ENCODE measurements at regions of chr10 and their contacts with region 1.

Region 1: GRCh38 chr10:78047314-78047891 is 13.7 kb downstream of the RPS24 start:
- DNase-seq: peak; percentile 85
- H3K4me3 Mint-ChIP-seq: no peak overlapping the region
- H3K27ac Mint-ChIP-seq: no peak overlapping the region
- H3K4me1 Mint-ChIP-seq: peaks cover 31% of the 10 kb centered on the region
- H3K27me3 Mint-ChIP-seq: no peaks in the 10 kb centered on the region

Region 2: DNA sequence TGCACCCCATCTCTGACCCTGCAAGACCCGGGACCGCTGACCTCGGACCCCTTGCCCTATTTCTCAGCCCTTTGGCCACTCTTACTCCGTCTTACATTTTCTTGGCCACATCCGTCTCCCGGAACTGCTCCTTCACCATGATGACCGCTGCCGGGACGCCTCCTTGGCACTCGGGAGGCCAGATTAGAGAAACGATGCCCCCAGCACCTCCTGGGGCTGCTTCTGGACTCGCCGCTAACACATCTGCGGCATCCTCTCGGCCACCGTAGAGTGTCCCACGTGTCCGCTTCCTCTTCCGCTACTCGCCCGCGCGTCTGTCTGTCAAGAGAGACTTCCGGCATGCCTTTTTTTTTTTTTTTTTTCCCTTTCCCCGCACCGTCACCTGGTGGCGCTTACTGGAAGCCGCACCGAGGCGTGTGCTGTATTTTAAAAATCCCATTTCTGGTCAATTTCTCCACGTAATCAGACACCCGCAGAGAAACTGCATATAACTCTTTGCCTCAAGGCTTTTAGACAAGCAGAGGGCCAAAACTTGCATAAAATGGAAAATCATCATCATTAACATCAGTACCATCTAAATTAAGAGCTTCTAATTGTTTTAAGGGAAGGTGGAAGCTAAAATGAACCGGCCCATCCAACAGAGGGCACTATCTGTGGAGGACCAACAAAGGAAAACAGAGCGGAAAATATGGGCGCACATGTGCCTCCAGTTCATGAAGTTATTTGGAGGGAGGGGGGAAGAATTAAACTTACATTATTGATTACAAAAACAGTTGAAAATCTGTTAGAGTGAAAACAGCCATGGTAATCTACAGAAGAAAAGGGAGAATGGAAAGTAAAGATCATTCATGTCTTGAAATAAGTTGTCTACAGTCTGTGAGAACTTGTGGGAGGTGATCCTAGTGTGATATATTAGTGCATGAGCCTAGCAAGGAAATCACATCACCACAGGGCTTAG is 17.9 kb before region 1 on chr10 and contains the start of gene POLR3A:
- CTCF ChIA-PET with region 1: interaction called, 19 read pairs
- POLR2A ChIA-PET with region 1: interaction called, 10 read pairs
- DNase-seq: peak; percentile 93
- H3K4me3 Mint-ChIP-seq: peak within 1 kb of the TSS; percentile 95
- H3K27ac Mint-ChIP-seq: peak within 1 kb of the TSS; percentile 86
- H3K4me1 Mint-ChIP-seq: peaks cover 37% of the 10 kb centered on the region
- H3K27me3 Mint-ChIP-seq: no peaks in the 10 kb centered on the region
- total RNA-seq, gene POLR3A: 16.6 to 16.8 TPM

Region 3: GRCh38 chr10:78035025-78035424 is 12.4 kb before region 1 on chr10:
- CTCF ChIA-PET with region 1: interaction called, 19 read pairs
- POLR2A ChIA-PET with region 1: interaction called, 10 read pairs
- DNase-seq: no peak
- H3K4me3 Mint-ChIP-seq: peak overlapping the region; percentile 82
- H3K27ac Mint-ChIP-seq: peak overlapping the region; percentile 44
- H3K4me1 Mint-ChIP-seq: peaks cover 57% of the 10 kb centered on the region
- H3K27me3 Mint-ChIP-seq: no peaks in the 10 kb centered on the region

Region 4: GRCh38 chr10:78657163-78657861 is 609.9 kb after region 1 on chr10:
- CTCF ChIA-PET with region 1: interaction called, 19 read pairs
- POLR2A ChIA-PET with region 1: no interaction called
- DNase-seq: peak; percentile 69
- H3K4me3 Mint-ChIP-seq: no peak overlapping the region
- H3K27ac Mint-ChIP-seq: no peak overlapping the region
- H3K4me1 Mint-ChIP-seq: no peaks in the 10 kb centered on the region
- H3K27me3 Mint-ChIP-seq: peaks cover 14% of the 10 kb centered on the region

Measured in activated CD4-positive, alpha-beta memory T cell treated with anti-CD3 and anti-CD28 coated beads, Interleukin-2, amount 10 ng/mL, durations not matched to agents 7 days and 5 days (primary cell).